Naive thymus-derived CD4-positive, alpha-beta T cell (primary cell): ENCODE measurements at regions of chr6 and their contacts with region 1.

Region 1: GRCh38 chr6:139872665-139873064 is 498.2 kb upstream of the CITED2 start:
- DNase-seq: no peak
- ATAC-seq: no peak
- H3K4me3 ChIP-seq: no peak overlapping the region
- H3K4me3 Mint-ChIP-seq: no peak overlapping the region
- H3K27ac ChIP-seq: no peak overlapping the region
- H3K27ac Mint-ChIP-seq: no peak overlapping the region
- H3K4me1 ChIP-seq: no peaks in the 10 kb centered on the region
- H3K4me1 Mint-ChIP-seq: peaks cover 0 to 1% (median 0%) of the 10 kb centered on the region in 7 donors
- H3K27me3 ChIP-seq: no peaks in the 10 kb centered on the region
- H3K27me3 Mint-ChIP-seq: peaks cover 0 to 14% (median 4%) of the 10 kb centered on the region in 5 donors

Region 2: GRCh38 chr6:139944976-139945375 is 72.3 kb after region 1 on chr6:
- CTCF ChIA-PET with region 1: no interaction called
- POLR2A ChIA-PET with region 1: interaction called, 11 read pairs
- intact Hi-C with region 1: no loop called
- DNase-seq: no peak
- ATAC-seq: no peak
- H3K4me3 ChIP-seq: no peak overlapping the region
- H3K4me3 Mint-ChIP-seq: no peak overlapping the region
- H3K27ac ChIP-seq: no peak overlapping the region
- H3K27ac Mint-ChIP-seq: no peak overlapping the region
- H3K4me1 ChIP-seq: no peaks in the 10 kb centered on the region
- H3K4me1 Mint-ChIP-seq: peaks cover 0 to 1% (median 0%) of the 10 kb centered on the region in 7 donors
- H3K27me3 ChIP-seq: no peaks in the 10 kb centered on the region
- H3K27me3 Mint-ChIP-seq: peaks cover 0 to 24% (median 14%) of the 10 kb centered on the region in 5 donors

Region 3: DNA sequence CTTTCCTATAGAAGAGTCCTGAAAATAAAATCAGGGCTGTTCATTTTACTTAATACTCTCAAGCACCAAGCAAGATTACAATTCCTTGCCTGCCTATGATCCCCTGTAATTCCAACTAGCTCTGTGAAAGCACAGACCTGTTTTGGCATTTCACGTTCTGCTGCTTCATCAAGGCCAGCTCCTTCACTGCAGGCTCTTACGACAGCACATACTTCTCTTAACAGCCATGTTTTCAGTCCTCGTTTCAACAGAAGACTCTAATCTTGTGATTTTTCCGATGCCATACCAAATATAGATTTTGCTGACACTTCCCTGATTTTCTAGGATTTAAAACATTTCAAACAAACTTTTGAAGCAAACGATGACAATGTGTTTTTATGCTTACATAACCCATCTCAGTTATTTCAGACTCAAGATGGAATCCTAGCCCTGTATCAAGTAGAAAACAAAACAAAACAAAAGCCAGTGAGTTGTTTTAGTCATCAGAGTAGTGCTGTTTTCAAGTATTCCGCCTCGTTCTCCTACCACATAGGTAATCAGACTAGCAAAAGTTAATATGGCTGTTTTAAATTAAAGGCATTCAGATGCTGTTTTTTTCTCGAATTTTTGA is 118.3 kb after region 1 on chr6:
- CTCF ChIA-PET with region 1: no interaction called
- POLR2A ChIA-PET with region 1: no interaction called
- intact Hi-C with region 1: no loop called
- DNase-seq: no peak
- ATAC-seq: no peak
- H3K4me3 ChIP-seq: no peak overlapping the region
- H3K4me3 Mint-ChIP-seq: no peak overlapping the region
- H3K27ac ChIP-seq: no peak overlapping the region
- H3K27ac Mint-ChIP-seq: no peak overlapping the region
- H3K4me1 ChIP-seq: no peaks in the 10 kb centered on the region
- H3K4me1 Mint-ChIP-seq: no peaks in the 10 kb centered on the region
- H3K27me3 ChIP-seq: no peaks in the 10 kb centered on the region
- H3K27me3 Mint-ChIP-seq: peaks cover 0 to 2% (median 0%) of the 10 kb centered on the region in 5 donors

Region 4: DNA sequence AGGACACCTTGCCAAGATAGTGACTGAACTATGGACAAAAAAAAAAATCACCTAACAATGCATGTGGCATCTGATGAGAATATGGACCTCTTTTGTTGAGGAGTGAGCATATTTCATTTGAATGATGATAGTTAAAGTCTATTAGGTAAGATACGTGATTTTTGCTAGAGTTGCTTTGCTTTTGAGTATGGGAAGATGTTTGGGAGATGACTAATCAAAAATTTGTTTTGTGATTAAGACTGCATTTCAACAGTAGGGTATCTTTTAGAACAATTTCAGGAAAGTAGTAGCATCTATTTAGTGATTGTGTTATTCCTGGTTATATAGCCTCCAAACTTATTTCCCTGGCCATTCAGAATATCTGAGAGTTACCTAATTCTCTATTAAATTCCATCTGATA is 380.4 kb after region 1 on chr6:
- CTCF ChIA-PET with region 1: no interaction called
- POLR2A ChIA-PET with region 1: no interaction called
- intact Hi-C with region 1: no loop called
- DNase-seq: no peak
- ATAC-seq: no peak
- H3K4me3 ChIP-seq: no peak overlapping the region
- H3K4me3 Mint-ChIP-seq: no peak overlapping the region
- H3K27ac ChIP-seq: no peak overlapping the region
- H3K27ac Mint-ChIP-seq: no peak overlapping the region
- H3K4me1 ChIP-seq: no peaks in the 10 kb centered on the region
- H3K4me1 Mint-ChIP-seq: no peaks in the 10 kb centered on the region
- H3K27me3 ChIP-seq: no peaks in the 10 kb centered on the region
- H3K27me3 Mint-ChIP-seq: peaks cover 0 to 20% (median 11%) of the 10 kb centered on the region in 5 donors